GM12878 (cell line): ENCODE measurements at regions of chr16 and their contacts with region 1.

Region 1: GRCh38 chr16:56700195-56700594 is 17.9 kb downstream of the MT1X start:
- DNase-seq: no peak
- ATAC-seq: no peak
- H3K4me3 ChIP-seq: no peak overlapping the region
- H3K27ac ChIP-seq: no peak overlapping the region
- H3K4me1 ChIP-seq: no peaks in the 10 kb centered on the region; the same call in 1 of the 2 replicates
- H3K27me3 ChIP-seq: no peaks in the 10 kb centered on the region; a peak in 2 of 4 replicates
- CTCF ChIP-seq: no peak
- EP300 ChIP-seq: no peak
- POLR2A ChIP-seq: no peak
- RAD21 ChIP-seq: no peak

Region 2: GRCh38 chr16:56450986-56451752 is 249.0 kb before region 1 on chr16 and contains the starts of genes NUDT21 and OGFOD1:
- CTCF ChIA-PET with region 1: interaction called, 5 read pairs
- POLR2A ChIA-PET with region 1: interaction called, 3 read pairs
- RAD21 ChIA-PET with region 1: interaction called, 11 read pairs
- SMC1A ChIA-PET with region 1: no interaction called
- in situ Hi-C with region 1: no loop called
- intact Hi-C with region 1: no loop called
- DNase-seq: peak; percentile 93
- ATAC-seq: peak; percentile 97
- H3K4me3 ChIP-seq: peak within 1 kb of the TSS; percentile 94
- H3K27ac ChIP-seq: peak within 1 kb of the TSS; percentile 83
- H3K4me1 ChIP-seq: peaks cover 3% of the 10 kb centered on the region; the same call in 1 of the 2 replicates
- H3K27me3 ChIP-seq: no peaks in the 10 kb centered on the region
- CTCF ChIP-seq: no peak
- EP300 ChIP-seq: no peak
- POLR2A ChIP-seq: peak; percentile 92
- RAD21 ChIP-seq: no peak
- polyA plus RNA-seq, gene NUDT21: 70.1 to 120 TPM
- polyA plus RNA-seq, gene OGFOD1: 31.4 to 40.7 TPM

Region 3: DNA sequence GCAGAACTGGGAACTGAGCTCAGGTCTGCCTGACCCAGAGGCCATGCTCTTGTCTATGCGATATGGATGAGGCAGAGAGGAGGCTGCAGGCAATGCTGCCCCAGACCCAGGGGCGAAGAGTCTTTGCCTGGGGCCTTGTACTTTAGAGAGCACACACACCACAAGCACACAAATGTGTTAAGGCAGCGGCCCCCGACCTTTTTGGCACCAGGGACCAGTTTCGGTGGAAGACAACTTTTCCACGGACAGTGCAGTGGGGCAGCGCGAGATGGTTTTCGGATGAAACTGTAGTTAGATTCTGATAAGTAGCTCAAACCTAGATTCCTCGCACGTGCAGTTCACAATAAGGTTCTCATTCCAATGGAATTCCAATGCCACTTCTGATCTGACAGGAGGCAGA is 128.7 kb before region 1 on chr16:
- CTCF ChIA-PET with region 1: interaction called, 90 read pairs
- POLR2A ChIA-PET with region 1: no interaction called
- RAD21 ChIA-PET with region 1: interaction called, 66 read pairs
- SMC1A ChIA-PET with region 1: interaction called, 67 read pairs
- in situ Hi-C with region 1: loop called (anchors 5 kb)
- intact Hi-C with region 1: no loop called
- DNase-seq: no peak
- ATAC-seq: no peak
- H3K4me3 ChIP-seq: no peak overlapping the region
- H3K27ac ChIP-seq: no peak overlapping the region
- H3K4me1 ChIP-seq: no peaks in the 10 kb centered on the region
- H3K27me3 ChIP-seq: peaks cover 0 to 3% of the 10 kb centered on the region in 2 experiments; a peak in 1 of 4 replicates
- CTCF ChIP-seq: no peak
- EP300 ChIP-seq: no peak
- POLR2A ChIP-seq: no peak
- RAD21 ChIP-seq: no peak

Region 4: GRCh38 chr16:56600398-56600999 is 99.7 kb before region 1 on chr16:
- CTCF ChIA-PET with region 1: interaction called, 77 read pairs
- POLR2A ChIA-PET with region 1: interaction called, 6 read pairs
- RAD21 ChIA-PET with region 1: interaction called, 44 read pairs
- SMC1A ChIA-PET with region 1: interaction called, 22 read pairs
- in situ Hi-C with region 1: no loop called
- intact Hi-C with region 1: no loop called
- DNase-seq: no peak
- ATAC-seq: peak; percentile 92
- H3K4me3 ChIP-seq: no peak overlapping the region
- H3K27ac ChIP-seq: no peak overlapping the region
- H3K4me1 ChIP-seq: no peaks in the 10 kb centered on the region
- H3K27me3 ChIP-seq: no peaks in the 10 kb centered on the region; a peak in 2 of 4 replicates
- CTCF ChIP-seq: peak; percentile 64 to 74 (median 64)
- EP300 ChIP-seq: no peak
- POLR2A ChIP-seq: no peak
- RAD21 ChIP-seq: peak; percentile 49

Region 5: DNA sequence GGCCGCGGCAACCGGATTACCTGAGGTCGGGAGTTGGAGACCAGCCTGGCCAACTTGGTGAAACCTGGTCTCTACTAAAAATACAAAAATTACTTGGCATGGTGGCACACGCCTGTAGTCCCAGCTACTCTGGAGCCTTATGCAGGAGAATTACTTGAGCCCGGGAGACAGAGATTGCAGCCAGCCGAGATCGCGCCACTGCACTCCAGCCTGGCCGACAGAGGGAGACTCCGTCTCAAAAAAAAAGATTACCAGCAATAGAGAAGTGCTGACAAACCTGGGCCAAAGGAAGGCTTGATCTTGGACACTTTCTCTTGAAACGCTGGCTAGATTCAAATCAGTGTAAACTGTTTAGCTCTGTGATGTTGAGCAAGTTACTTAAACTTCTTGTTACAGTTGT is 26.3 kb before region 1 on chr16:
- CTCF ChIA-PET with region 1: interaction called, 28 read pairs
- POLR2A ChIA-PET with region 1: interaction called, 3 read pairs
- RAD21 ChIA-PET with region 1: interaction called, 11 read pairs
- SMC1A ChIA-PET with region 1: interaction called, 8 read pairs
- in situ Hi-C with region 1: no loop called
- intact Hi-C with region 1: loop called (anchors 1 kb)
- DNase-seq: no peak
- ATAC-seq: peak; percentile 52
- H3K4me3 ChIP-seq: no peak overlapping the region
- H3K27ac ChIP-seq: no peak overlapping the region
- H3K4me1 ChIP-seq: no peaks in the 10 kb centered on the region
- H3K27me3 ChIP-seq: peaks cover 11 to 14% of the 10 kb centered on the region in 2 experiments
- CTCF ChIP-seq: peak; percentile 45 to 58 (median 47)
- EP300 ChIP-seq: no peak
- POLR2A ChIP-seq: no peak
- RAD21 ChIP-seq: peak; percentile 60

Region 6: DNA sequence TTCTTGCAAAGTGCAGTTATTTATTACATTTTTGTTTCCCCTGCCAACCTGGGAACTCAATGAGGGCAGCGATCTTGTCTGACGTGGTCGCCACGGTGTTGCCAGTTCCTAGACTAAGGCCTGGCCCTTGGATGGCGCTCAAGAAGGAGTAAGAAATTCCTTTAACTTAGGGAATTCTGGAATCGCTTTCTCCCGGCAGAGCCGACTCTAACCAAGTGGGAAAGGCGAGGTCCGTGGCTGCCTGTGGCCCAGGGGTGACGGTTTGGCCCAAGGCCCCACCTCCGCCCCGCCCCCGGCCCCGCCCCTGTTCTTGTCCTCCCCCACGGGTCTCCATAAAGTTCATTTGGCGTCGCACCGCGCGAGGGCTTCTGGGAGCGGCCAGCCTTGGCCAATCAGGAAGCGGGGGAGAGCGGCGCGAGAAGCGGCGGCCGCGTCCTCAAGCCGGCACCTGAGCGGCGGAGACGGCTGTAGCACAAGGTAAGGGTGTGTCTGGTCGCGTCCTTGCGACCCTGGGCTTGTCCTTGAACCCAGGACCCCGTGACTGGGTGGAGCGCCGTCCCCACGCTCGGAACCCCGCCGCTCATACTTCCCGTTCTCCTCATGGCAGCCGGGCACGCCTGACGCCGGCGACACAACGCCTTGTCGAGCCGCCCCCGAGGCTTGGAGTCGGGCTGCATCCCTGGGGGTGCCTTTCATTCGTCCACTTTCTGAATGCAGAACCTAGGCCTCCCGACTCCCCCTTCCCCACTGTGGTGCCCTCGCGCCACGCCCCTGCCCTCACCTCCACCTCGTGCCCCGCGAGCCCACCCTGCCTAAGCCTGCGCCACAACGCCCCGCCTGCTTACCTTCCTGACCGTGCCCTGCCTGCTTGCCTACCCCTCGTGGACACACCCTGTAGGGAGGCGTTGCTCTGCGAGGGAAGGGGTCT is 29.8 kb after region 1 on chr16 and contains the start of gene NUP93:
- CTCF ChIA-PET with region 1: interaction called, 8 read pairs
- POLR2A ChIA-PET with region 1: no interaction called
- RAD21 ChIA-PET with region 1: interaction called, 4 read pairs
- SMC1A ChIA-PET with region 1: interaction called, 10 read pairs
- in situ Hi-C with region 1: no loop called
- intact Hi-C with region 1: no loop called
- DNase-seq: peak; percentile 47
- ATAC-seq: peak; percentile 84
- H3K4me3 ChIP-seq: peak within 1 kb of the TSS; percentile 95
- H3K27ac ChIP-seq: peak within 1 kb of the TSS; percentile 56
- H3K4me1 ChIP-seq: peaks cover 20% of the 10 kb centered on the region
- H3K27me3 ChIP-seq: no peaks in the 10 kb centered on the region
- CTCF ChIP-seq: 0 out of 6 replicates have a peak, but pooled peaks of 1 of the 3 experiments have one; percentile 4
- EP300 ChIP-seq: no peak
- POLR2A ChIP-seq: peak; percentile 93
- RAD21 ChIP-seq: no peak
- polyA plus RNA-seq, gene NUP93: 87.9 to 118 TPM